WTC11 (cell line): ENCODE measurements at regions of chr17 and their contacts with region 1.

Region 1: DNA sequence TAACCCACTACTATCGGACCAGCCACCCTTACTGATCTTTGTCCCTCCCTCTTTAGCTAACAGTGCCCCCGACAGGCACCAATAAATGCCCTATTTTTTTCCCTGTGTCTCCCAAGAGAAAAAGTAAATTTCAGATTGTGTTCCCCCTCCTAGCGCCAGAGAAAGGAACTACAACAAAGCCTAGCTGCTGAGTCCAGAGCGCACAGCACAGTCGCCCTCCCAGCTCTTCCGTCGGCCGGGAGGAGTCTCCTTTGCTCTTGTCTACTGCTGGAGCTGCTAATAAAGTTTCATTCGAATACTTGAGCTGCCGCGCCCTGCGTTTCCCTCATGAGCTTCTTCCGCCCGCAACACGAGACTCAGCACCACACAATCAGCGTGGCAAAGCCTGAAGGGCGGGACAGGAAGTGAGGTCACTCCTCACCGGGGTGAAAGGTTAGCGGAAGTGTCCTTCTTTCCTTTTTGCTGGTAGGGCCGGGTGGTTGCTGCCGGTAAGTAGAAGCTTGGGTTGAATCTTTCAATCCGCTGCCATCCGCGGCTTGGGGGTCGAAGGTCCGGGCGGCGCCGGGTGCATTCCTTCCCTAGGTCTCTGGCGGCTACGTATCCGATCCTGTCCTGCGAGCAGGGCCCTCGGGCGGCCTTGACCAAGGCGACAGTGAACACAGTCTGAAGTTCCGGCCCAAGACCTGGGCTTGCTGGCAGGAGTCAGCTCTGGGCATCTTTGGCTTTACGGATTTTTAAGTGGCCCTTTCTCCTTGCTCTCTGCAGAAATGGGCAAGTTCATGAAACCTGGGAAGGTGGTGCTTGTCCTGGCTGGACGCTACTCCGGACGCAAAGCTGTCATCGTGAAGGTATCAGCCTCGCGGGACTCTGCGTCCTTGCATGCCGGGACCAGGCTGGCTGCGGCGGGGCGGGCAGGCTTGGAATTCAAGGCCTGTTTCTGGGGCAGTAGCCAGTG is at the start of gene RPL27:
- DNase-seq: peak; percentile 96
- ATAC-seq: peak; percentile 96
- H3K4me3 Mint-ChIP-seq: peak within 1 kb of the TSS; percentile 100
- H3K27ac Mint-ChIP-seq: peak within 1 kb of the TSS; percentile 99
- H3K4me1 Mint-ChIP-seq: peaks cover 31% of the 10 kb centered on the region
- H3K27me3 Mint-ChIP-seq: no peaks in the 10 kb centered on the region; the same call in 1 of the 2 replicates
- CTCF ChIP-seq: peak; percentile 77
- total RNA-seq, gene RPL27: 1,391 to 1,553 TPM (median 1,518 TPM) in 3 replicates

Region 2: GRCh38 chr17:42928714-42929496 is 69.4 kb before region 1 on chr17:
- CTCF ChIA-PET with region 1: interaction called, 10 read pairs
- POLR2A ChIA-PET with region 1: no interaction called
- DNase-seq: peak; percentile 32
- ATAC-seq: peak; percentile 97
- H3K4me3 Mint-ChIP-seq: no peak overlapping the region
- H3K27ac Mint-ChIP-seq: peak overlapping the region; percentile 72
- H3K4me1 Mint-ChIP-seq: peaks cover 14% of the 10 kb centered on the region
- H3K27me3 Mint-ChIP-seq: no peaks in the 10 kb centered on the region
- CTCF ChIP-seq: peak; percentile 45

Region 3: DNA sequence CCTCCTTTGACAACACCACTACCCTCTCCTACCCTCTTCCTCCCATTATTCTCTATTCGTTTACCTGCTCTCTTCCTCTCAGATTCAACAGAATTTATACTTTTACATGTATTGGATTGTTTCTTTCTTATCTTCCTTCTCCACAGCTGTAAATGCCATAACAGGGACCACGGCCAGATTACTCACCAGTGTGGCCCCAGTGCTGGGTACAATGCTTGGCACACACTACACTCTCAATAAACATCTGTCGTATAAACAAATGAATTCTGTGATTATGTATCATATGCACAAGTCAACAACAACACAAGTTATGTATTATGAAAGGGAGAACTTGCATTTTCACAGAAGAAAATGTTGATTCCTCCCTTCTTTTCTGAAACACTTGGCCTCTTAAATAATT is 54.0 kb before region 1 on chr17:
- CTCF ChIA-PET with region 1: interaction called, 5 read pairs
- POLR2A ChIA-PET with region 1: interaction called, 16 read pairs
- DNase-seq: no peak
- ATAC-seq: no peak
- H3K4me3 Mint-ChIP-seq: no peak overlapping the region
- H3K27ac Mint-ChIP-seq: no peak overlapping the region
- H3K4me1 Mint-ChIP-seq: no peaks in the 10 kb centered on the region
- H3K27me3 Mint-ChIP-seq: no peaks in the 10 kb centered on the region
- CTCF ChIP-seq: no peak

Region 4: DNA sequence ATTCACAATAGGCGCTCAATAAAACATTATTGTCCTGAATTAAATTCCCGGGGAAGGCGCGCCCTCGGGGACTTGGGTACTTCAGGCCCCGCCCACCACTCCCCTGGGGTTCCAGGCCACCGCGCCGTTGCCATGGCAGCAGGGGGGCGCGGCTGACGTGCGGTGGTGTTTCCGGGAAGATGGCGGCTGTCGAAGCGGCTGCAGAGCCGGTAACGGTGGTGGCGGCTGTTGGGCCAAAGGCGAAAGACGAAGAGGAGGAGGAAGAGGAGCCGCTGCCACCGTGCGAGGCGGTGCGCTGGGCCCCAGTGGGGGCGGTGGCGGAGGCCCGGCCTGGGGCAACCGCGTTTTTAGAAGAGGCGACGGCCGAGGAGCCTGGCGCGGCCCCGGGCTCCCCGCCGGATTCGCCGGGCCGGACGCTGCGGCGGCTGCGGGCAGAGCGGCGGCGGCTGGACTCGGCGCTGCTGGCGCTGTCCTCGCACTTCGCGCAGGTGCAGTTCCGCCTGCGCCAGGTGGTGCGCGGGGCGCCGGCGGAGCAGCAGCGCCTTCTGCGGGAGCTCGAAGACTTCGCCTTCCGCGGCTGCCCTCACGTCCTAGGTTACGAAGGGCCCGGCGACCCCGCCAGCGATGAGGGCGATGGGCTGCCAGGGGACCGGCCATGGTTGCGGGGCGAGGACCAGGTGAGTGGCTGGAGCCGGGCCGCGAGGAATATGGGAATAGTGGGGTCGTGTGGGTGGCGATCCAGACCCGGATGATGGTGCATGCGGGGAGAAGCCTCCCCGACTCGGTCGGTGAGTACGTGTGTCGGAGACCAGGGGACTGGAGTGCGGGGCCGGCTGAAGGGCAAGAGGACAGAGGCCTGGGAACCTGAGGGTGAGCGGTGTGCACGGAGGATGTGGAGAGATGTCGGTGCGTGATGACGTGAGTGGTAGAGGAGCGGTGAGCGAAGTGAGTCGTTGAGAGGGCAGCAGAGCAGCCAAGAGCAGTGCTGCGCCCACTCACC is 17.6 kb before region 1 on chr17 and contains the start of gene RUNDC1:
- CTCF ChIA-PET with region 1: interaction called, 14 read pairs
- POLR2A ChIA-PET with region 1: interaction called, 9 read pairs
- DNase-seq: peak; percentile 92
- ATAC-seq: peak; percentile 72
- H3K4me3 Mint-ChIP-seq: peak within 1 kb of the TSS; percentile 99
- H3K27ac Mint-ChIP-seq: peak within 1 kb of the TSS; percentile 97
- H3K4me1 Mint-ChIP-seq: peaks cover 20% of the 10 kb centered on the region
- H3K27me3 Mint-ChIP-seq: peaks cover 4% of the 10 kb centered on the region; the same call in 1 of the 2 replicates
- CTCF ChIP-seq: no peak
- total RNA-seq, gene RUNDC1: 12.2 to 14.2 TPM (median 12.7 TPM) in 3 replicates

Region 5: DNA sequence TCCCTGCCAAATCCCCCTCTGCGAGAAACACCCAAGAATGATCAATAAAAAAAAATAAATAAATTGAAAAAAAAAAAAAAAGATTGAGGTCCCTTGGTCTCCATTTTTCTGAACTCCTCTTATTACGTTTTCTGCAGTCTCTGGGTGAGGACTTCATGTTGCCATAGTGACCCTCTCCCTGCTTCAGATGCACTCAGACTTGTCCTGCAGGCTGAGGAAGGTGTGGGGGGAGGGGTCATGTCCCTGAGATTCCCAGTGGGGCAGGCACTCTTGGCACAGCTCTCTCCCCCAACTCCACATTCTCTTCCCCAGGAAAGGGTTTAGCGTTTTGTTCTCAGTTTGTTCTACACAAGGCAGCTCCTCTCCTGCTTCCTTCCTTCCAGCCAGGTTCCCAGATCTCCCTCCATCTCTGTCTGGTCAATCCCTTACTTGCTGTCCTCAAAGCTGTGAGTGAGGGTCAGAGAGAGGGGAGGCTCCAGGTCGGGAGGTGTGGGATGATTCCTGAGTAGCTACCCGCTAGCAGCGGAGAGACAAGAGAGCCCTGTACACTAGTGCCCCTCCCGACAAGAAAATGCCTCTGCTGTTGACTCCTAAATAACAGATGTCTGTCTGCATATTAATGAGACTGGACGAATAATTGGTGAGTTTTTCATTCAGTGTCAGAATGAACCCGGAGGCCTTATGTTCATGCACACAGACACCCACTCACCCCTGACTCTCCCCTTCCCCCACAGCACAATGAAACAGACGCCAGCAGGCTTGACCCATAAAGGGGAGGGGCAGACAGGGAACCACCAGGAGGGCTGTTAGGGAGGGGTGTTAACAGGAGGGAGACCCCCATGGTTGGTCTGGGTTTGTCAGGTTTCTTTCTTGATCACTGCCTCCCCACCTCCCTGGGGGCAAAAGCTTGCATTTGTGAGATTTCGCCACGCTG is 36.0 kb after region 1 on chr17:
- CTCF ChIA-PET with region 1: interaction called, 11 read pairs
- POLR2A ChIA-PET with region 1: no interaction called
- DNase-seq: peak; percentile 41
- ATAC-seq: peak; percentile 31
- H3K4me3 Mint-ChIP-seq: peak overlapping the region; percentile 52
- H3K27ac Mint-ChIP-seq: peak overlapping the region; percentile 92
- H3K4me1 Mint-ChIP-seq: peaks cover 64% of the 10 kb centered on the region
- H3K27me3 Mint-ChIP-seq: no peaks in the 10 kb centered on the region
- CTCF ChIP-seq: no peak

Region 6: GRCh38 chr17:43062984-43063638 is 64.8 kb after region 1 on chr17:
- CTCF ChIA-PET with region 1: no interaction called
- POLR2A ChIA-PET with region 1: no interaction called
- DNase-seq: no peak
- ATAC-seq: 0 out of 2 replicates have a peak, but pooled peaks have one; percentile 22
- H3K4me3 Mint-ChIP-seq: no peak overlapping the region
- H3K27ac Mint-ChIP-seq: peak overlapping the region; percentile 82
- H3K4me1 Mint-ChIP-seq: peaks cover 21% of the 10 kb centered on the region
- H3K27me3 Mint-ChIP-seq: no peaks in the 10 kb centered on the region
- CTCF ChIP-seq: no peak

Region 7: GRCh38 chr17:43316522-43317142 is 318.4 kb after region 1 on chr17:
- CTCF ChIA-PET with region 1: interaction called, 13 read pairs
- POLR2A ChIA-PET with region 1: interaction called, 6 read pairs
- DNase-seq: peak; percentile 30
- ATAC-seq: no peak
- H3K4me3 Mint-ChIP-seq: 0 out of 2 replicates have a peak overlapping the region, but pooled peaks have one; percentile 8
- H3K27ac Mint-ChIP-seq: 0 out of 2 replicates have a peak overlapping the region, but pooled peaks have one; percentile 41
- H3K4me1 Mint-ChIP-seq: peaks cover 3% of the 10 kb centered on the region
- H3K27me3 Mint-ChIP-seq: peaks cover 10% of the 10 kb centered on the region
- CTCF ChIP-seq: no peak